ENCODE measurements at regions of chr9 and their contacts with region 1.

Region 1: DNA sequence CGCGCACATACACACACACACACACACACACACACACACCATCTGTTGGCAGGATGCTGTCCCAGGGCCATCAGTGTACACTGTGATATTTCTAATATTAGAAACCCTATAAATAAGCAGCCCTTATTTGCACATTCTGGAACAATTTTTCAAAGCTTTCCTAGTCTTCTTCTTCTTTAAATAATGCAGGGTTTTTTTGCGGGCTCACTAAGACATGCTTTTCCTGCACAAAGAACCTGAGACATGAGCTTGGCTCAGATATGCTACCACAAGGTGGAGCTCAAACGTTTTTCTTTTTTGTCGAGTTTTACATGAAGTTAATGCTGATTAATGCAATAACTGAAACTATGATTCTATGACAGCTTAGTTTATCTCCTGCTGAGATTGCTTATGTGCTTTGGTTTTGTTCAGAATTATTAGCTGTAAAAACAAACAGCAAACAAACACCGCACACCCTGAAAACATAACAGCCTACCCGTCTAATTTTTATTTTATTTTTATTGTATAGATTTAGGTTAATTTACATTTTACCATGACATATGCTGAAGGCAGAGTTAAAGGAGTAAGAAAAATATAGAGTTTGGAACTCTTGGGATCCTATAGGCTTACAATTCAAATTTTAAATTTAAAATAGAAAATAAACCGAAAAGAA is 95.8 kb downstream of the ALDH1A1 start:
- DNase-seq: peak; percentile 56
- ATAC-seq: peak; percentile 69
- H3K4me3 ChIP-seq: no peak overlapping the region
- H3K27ac ChIP-seq: no peak overlapping the region
- H3K4me1 ChIP-seq: no peaks in the 10 kb centered on the region; the same call in 1 of the 2 replicates
- H3K27me3 ChIP-seq: no peaks in the 10 kb centered on the region
- CTCF ChIP-seq: peak; percentile 50
- POLR2A ChIP-seq: no peak
- RAD21 ChIP-seq: peak; percentile 33; the same call in 1 of the 2 replicates

Region 2: DNA sequence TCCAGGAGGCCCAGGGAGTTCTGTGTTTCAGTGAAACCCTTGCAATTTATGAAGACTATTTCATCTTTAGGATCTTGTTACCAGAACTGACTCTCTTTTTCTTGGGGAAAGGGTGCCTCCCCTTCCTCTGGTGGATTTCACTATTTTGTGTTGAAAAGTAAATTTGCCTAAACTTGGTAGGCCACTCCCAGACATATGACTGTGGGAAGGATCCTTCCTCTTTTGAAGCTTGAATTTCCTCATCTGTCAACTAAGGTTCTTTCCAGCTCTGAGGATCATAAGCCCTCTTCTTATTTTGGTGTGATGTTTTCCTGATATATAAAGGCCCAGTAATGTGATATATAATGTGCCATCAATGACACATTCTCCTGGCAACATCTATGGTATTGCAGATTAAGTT is 433.0 kb before region 1 on chr9:
- CTCF ChIA-PET with region 1: no interaction called
- POLR2A ChIA-PET with region 1: no interaction called
- dilution Hi-C with region 1: no loop called
- in situ Hi-C with region 1: no loop called
- intact Hi-C with region 1: no loop called
- DNase-seq: no peak
- ATAC-seq: no peak
- H3K4me3 ChIP-seq: no peak overlapping the region
- H3K27ac ChIP-seq: no peak overlapping the region
- H3K4me1 ChIP-seq: peaks cover 2% of the 10 kb centered on the region; the same call in 1 of the 2 replicates
- H3K27me3 ChIP-seq: no peaks in the 10 kb centered on the region
- CTCF ChIP-seq: no peak
- POLR2A ChIP-seq: no peak
- RAD21 ChIP-seq: no peak

Region 3: DNA sequence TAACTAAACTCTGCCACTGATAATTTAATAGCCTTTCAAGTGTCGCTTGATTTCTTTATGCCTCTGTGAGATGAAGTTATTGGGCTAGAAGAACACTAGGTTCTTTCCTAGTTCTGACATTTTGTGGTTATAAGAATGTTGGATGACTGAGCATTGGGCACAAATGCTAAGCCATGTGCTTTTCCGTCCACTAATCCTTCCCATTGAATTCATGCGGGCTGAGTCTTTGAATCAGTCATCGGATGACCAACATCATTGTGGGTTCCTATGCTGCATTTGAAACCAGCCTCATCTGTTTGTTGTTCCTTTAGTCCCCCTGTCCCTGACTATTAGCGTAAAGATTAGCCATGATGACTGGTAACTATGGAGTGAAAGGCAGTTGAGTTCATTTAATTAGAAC is 37.2 kb after region 1 on chr9:
- CTCF ChIA-PET with region 1: no interaction called
- POLR2A ChIA-PET with region 1: no interaction called
- dilution Hi-C with region 1: no loop called
- in situ Hi-C with region 1: no loop called
- intact Hi-C with region 1: no loop called
- DNase-seq: peak; percentile 4
- ATAC-seq: no peak
- H3K4me3 ChIP-seq: no peak overlapping the region
- H3K27ac ChIP-seq: no peak overlapping the region
- H3K4me1 ChIP-seq: no peaks in the 10 kb centered on the region
- H3K27me3 ChIP-seq: no peaks in the 10 kb centered on the region
- CTCF ChIP-seq: no peak
- POLR2A ChIP-seq: no peak
- RAD21 ChIP-seq: no peak

Region 4: DNA sequence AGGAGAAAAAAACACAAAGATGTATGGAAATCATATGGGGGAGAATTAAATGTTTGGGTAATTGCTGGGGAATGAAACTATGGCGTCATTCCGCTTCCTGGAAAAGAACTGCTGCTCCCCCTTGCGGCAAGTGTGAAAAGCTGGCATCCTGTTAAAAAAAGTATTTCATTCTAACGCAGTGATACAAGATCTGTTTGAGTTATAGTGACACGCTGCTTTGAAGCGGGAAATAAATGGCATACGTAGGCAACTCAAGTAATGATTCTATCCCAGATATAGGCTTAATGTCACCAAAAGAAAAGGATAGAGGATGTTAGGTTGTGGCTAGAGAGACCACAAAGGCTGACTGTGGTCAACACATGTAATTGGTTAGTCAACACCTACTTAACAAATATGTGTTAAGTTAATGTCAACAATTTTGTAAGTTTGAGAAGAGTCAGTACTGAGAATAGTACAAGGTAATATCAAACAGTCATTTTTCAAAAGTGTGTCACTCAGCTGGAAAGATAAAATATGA is 166.0 kb after region 1 on chr9:
- CTCF ChIA-PET with region 1: interaction called, 5 read pairs
- POLR2A ChIA-PET with region 1: no interaction called
- dilution Hi-C with region 1: no loop called
- in situ Hi-C with region 1: loop called (anchors 10 kb)
- intact Hi-C with region 1: loop called (anchors 2 kb)
- DNase-seq: peak; percentile 63
- ATAC-seq: peak; percentile 74
- H3K4me3 ChIP-seq: no peak overlapping the region
- H3K27ac ChIP-seq: no peak overlapping the region
- H3K4me1 ChIP-seq: no peaks in the 10 kb centered on the region
- H3K27me3 ChIP-seq: no peaks in the 10 kb centered on the region
- CTCF ChIP-seq: peak; percentile 82
- POLR2A ChIP-seq: no peak
- RAD21 ChIP-seq: peak; percentile 65

Region 5: GRCh38 chr9:73081979-73082657 is 225.0 kb after region 1 on chr9:
- CTCF ChIA-PET with region 1: interaction called, 9 read pairs
- POLR2A ChIA-PET with region 1: no interaction called
- dilution Hi-C with region 1: no loop called
- in situ Hi-C with region 1: no loop called
- intact Hi-C with region 1: loop called (anchors 1 kb)
- DNase-seq: peak; percentile 27
- ATAC-seq: peak; percentile 82
- H3K4me3 ChIP-seq: no peak overlapping the region
- H3K27ac ChIP-seq: no peak overlapping the region
- H3K4me1 ChIP-seq: no peaks in the 10 kb centered on the region
- H3K27me3 ChIP-seq: no peaks in the 10 kb centered on the region; the same call in 1 of the 2 replicates
- CTCF ChIP-seq: peak; percentile 69
- POLR2A ChIP-seq: no peak
- RAD21 ChIP-seq: peak; percentile 63

Region 6: DNA sequence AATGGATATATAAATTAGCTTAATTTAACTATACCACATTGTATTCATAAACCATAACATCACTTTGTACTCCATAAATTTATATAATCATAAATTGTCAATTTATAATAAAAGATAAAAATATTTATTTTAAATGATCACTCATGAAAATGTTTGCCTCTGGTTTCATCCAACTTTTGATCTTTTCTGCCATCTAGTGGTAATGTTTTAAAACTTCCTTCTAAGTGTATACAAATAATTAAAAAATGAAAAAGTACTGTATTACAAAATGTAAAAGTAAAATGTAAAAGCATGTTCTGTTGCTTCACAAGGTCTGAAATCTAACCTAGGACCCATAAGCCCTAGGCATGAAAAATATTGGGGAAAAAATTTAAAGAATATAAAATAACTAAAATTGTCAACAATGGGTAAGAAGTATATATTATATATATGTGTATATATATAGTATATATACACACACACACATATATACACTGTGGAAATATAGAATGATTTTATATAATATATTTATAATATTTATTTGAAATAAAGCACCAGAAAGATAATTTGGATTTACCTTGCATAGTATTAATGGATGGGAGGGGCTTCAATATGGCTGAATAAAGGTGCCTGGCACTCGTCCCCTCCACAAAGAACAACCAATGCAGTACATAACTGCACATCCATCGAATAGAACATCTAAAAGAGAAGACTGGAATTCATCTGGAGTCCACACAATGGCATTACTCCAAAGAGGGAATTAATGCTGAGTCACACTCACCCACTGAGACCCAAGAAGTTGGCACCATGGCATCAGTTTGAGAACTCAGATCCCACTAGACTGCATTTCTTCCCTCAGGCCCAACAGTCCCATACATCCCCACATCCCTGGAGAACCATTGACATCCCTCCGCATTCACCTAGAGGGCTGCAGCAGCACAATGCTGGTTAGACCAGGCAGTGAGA is 327.1 kb after region 1 on chr9:
- CTCF ChIA-PET with region 1: no interaction called
- POLR2A ChIA-PET with region 1: no interaction called
- dilution Hi-C with region 1: no loop called
- in situ Hi-C with region 1: loop called (anchors 10 kb)
- intact Hi-C with region 1: loop called (anchors 2 kb)
- DNase-seq: peak; percentile 65
- ATAC-seq: peak; percentile 32
- H3K4me3 ChIP-seq: no peak overlapping the region
- H3K27ac ChIP-seq: no peak overlapping the region
- H3K4me1 ChIP-seq: 0 out of 2 replicates have a peak, but pooled peaks cover 1% of the 10 kb centered on the region
- H3K27me3 ChIP-seq: peaks cover 3% of the 10 kb centered on the region; the same call in 1 of the 2 replicates
- CTCF ChIP-seq: peak; percentile 63
- POLR2A ChIP-seq: no peak
- RAD21 ChIP-seq: peak; percentile 73